Dendritic cell treated with granulocyte-macrophage colony-stimulating factor and Interleukin-4, amounts not matched to agents 40 ng/mL and 50 ng/mL, for 4 days (primary cell): ENCODE measurements at regions of chr19 and their contacts with region 1.

Region 1: DNA sequence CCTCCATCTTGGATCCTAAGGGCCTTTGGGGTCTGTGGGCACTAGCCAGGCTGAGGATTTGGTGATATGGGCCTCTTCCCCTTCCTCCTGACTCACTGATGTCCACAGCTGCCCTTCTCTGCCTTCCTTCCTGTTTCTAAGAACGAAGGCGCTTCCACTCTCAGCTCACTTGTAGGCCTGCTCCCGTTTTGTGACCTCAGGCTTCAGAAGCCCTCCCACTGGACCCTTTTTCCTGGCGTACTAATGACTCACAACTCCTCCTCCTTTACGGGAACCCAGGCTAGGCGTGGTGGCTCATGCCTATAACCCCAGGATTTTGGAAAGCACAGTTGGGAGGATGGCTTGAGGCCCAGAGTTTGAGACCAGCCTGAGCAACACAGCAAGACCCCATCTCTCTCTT is 55.6 kb downstream of the TMED1 start:
- H3K4me3 Mint-ChIP-seq: peak overlapping the region; percentile 20
- H3K27ac Mint-ChIP-seq: peak overlapping the region; percentile 94
- H3K4me1 Mint-ChIP-seq: peaks cover 84% of the 10 kb centered on the region
- H3K27me3 Mint-ChIP-seq: no peaks in the 10 kb centered on the region

Region 2: GRCh38 chr19:10670182-10670581 is 110.2 kb before region 1 on chr19:
- intact Hi-C with region 1: no loop called
- H3K4me3 Mint-ChIP-seq: no peak overlapping the region
- H3K27ac Mint-ChIP-seq: no peak overlapping the region
- H3K4me1 Mint-ChIP-seq: peaks cover 51% of the 10 kb centered on the region
- H3K27me3 Mint-ChIP-seq: no peaks in the 10 kb centered on the region

Region 3: DNA sequence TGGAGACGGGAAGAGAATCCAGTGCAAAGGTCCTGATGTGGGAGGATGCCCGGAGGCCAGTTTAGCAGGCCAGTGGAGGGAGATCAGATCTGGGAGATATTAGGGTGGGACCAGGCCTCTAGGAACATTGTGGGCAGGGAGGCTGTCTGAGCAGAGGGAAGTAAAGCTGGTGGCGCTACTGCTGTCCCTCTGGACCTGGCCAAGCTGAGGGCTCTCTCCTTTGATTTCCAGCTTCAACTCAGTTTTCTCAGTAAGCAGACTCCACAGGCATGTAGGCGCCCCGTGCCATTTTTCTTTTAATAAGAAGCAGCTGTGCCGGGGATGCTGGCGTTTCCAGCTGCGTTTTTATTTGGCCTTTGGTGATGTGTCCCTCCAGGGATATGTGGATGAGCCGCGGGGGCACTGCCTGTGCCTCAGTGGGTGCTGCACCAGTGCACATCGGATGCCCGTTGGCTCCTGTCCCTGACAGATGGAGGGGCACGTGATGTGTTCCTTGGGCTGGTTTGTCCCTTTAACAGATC is 55.8 kb before region 1 on chr19:
- intact Hi-C with region 1: no loop called
- H3K4me3 Mint-ChIP-seq: no peak overlapping the region
- H3K27ac Mint-ChIP-seq: peak overlapping the region; percentile 50
- H3K4me1 Mint-ChIP-seq: peaks cover 86% of the 10 kb centered on the region
- H3K27me3 Mint-ChIP-seq: no peaks in the 10 kb centered on the region

Region 4: DNA sequence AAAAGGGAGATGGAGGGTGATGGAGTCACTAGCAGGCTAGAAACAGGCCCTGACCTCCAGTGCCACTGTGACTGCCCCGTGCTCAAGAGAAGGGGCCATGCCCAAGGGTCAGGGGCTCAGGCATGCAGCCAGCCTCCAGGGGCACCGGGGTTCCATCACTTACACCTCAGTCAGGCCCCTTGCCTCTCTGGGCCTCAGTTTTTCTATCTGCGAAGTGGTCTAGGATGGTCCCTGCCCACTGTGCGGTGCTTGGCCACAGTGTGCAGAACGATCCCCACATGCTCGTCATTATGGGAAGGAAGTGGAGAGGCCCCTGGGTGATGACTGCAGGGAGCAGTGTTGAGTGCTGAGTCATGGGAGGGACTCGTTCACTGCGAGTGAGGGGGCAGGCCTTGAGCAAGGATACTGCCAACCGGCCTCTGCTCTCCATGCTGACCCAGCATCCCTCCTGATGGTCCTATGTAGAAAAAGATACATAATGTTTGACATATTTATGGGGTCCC is 32.6 kb after region 1 on chr19:
- intact Hi-C with region 1: loop called (anchors 2 kb)
- H3K4me3 Mint-ChIP-seq: no peak overlapping the region
- H3K27ac Mint-ChIP-seq: peak overlapping the region; percentile 93
- H3K4me1 Mint-ChIP-seq: peaks cover 77% of the 10 kb centered on the region
- H3K27me3 Mint-ChIP-seq: no peaks in the 10 kb centered on the region

Region 5: DNA sequence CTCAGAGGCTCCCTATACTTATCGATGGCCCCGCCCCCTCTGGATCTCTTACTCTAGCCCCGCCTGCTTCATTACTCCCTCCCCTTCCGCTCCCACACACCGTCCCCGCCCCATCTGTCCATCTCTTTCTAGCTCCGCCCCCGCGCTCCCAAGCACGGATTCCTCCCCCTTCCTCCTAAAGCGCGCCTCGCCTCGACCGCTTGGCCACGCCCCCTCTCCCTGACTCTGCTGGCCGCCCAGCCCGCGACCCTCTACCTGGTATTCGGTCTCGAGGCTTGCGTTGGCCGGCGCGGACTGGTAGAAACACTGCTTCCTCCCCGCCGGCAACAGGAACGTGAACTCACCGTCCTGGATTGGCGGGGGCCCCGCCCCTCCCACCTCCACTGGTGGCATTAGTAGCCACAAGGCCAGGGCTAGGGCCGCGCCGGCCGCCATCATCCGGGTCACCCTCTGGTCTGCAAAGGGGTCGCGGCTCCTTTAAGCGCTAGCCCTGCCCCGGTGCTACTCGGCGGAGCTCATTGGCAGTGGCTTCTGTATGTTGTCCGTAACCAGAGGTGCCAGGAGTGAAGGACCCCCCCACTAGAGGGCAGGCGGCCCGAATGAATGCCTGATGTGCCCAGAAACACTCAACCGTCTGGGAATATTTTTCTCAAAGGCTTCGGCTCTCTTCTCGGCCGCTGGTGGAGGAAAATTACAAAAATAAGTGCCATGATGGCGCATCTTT is 55.5 kb after region 1 on chr19 and contains the start of gene TMED1:
- intact Hi-C with region 1: no loop called
- H3K4me3 Mint-ChIP-seq: peak within 1 kb of the TSS; percentile 97
- H3K27ac Mint-ChIP-seq: peak within 1 kb of the TSS; percentile 100
- H3K4me1 Mint-ChIP-seq: peaks cover 31% of the 10 kb centered on the region
- H3K27me3 Mint-ChIP-seq: no peaks in the 10 kb centered on the region

Region 6: GRCh38 chr19:10864538-10864899 is 84.2 kb after region 1 on chr19:
- intact Hi-C with region 1: loop called (anchors 10 kb)
- H3K4me3 Mint-ChIP-seq: no peak overlapping the region
- H3K27ac Mint-ChIP-seq: peak overlapping the region; percentile 36
- H3K4me1 Mint-ChIP-seq: peaks cover 64% of the 10 kb centered on the region
- H3K27me3 Mint-ChIP-seq: no peaks in the 10 kb centered on the region